Endothelial cell of umbilical vein (primary cell): ENCODE measurements at regions of chr3 and their contacts with region 1.

Region 1: DNA sequence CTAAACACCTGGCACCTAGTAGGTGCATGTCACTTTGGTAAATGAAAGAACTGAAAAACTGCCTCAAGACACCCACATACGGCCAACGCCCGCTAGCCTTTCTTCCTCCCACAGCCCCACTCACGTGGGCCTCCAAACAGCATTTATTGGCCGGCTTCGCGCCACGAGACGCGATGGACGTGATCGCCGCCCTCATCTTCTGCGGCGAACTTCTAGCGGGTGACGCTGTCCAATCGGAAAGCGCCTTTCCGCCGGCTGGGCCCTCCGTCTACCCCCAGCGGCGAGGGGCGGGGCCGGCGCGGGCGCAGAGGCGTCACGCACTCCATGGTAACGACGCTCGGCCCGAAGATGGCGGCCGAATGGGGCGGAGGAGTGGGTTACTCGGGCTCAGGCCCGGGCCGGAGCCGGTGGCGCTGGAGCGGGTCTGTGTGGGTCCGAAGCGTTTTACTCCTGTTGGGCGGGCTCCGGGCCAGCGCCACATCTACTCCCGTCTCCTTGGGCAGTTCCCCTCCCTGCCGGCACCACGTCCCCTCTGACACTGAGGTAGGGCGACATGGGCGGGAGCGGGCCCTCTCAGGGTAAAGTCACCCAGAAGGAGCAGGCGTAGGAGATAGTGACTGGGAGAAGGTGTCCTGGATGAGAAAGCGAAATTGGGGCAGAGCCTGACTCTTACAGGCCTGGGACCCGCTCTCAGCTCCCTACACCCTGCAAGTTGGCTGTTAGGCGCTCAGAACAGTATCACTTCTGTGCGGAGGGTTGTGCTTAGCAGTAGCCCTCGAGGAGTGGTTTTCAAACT is at the start of gene LMLN:
- DNase-seq: peak; percentile 97
- H3K4me3 ChIP-seq: peak within 1 kb of the TSS; percentile 30 to 75 (median 68)
- H3K27ac ChIP-seq: no peak within 1 kb of the TSS
- H3K4me1 ChIP-seq: peaks cover 15% of the 10 kb centered on the region
- H3K27me3 ChIP-seq: no peaks in the 10 kb centered on the region
- CTCF ChIP-seq: no peak
- POLR2A ChIP-seq: peak; percentile 77
- total RNA-seq, gene LMLN: 6.5 and 9.0 TPM in 2 replicates

Region 2: GRCh38 chr3:197682713-197683112 is 277.4 kb before region 1 on chr3:
- CTCF ChIA-PET with region 1: no interaction called
- POLR2A ChIA-PET with region 1: no interaction called
- dilution Hi-C with region 1: no loop called
- intact Hi-C with region 1: no loop called
- DNase-seq: no peak
- H3K4me3 ChIP-seq: no peak overlapping the region
- H3K27ac ChIP-seq: no peak overlapping the region
- H3K4me1 ChIP-seq: no peaks in the 10 kb centered on the region
- H3K27me3 ChIP-seq: no peaks in the 10 kb centered on the region
- CTCF ChIP-seq: no peak
- POLR2A ChIP-seq: no peak

Region 3: DNA sequence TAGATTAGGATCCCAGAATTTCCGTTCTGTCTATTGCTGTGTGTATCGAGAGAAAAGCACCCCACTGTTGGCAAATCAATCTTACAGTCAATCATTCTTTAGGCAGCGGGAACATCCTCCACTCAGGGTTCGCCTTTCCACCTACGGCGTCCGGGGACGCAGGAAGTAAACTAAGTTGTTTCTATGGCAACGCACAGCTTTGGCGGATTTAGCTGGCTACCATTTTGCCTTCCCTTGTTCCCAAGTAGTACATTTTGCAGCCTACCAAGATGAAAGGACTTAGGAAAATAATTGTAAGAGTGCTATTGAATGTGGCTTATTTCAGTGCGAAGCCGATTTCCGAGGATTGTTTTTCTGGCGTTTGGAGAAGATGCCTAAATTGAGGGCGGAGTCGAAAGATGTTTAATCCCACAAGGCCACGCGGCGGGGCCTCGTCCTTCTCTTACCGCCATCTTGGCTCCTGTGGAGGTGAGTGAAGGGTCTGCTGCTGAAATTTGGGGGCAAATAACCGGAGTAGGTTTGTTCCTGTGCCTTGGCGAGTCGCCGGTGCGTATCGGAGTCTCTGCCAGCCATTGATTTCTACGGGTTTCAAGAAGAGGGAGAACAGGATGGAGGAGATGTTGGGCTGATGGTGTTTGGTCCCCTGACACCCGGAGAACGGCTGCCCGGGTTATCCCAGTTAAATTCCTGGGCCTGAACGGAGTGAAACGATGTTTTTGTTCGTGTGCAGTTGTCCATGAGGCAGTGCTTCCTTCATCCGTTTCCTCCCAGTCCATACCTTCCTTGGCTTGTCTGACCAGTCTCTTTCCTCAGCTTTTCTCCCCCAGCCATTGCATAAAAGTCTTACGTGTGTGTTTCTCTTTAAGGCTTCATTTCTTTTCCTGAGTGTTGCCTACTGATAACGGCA is 10.1 kb before region 1 on chr3 and contains the start of gene RPL35A:
- CTCF ChIA-PET with region 1: interaction called, 3 read pairs
- POLR2A ChIA-PET with region 1: interaction called, 4 read pairs
- dilution Hi-C with region 1: no loop called
- intact Hi-C with region 1: loop called (anchors 1 kb)
- DNase-seq: peak; percentile 98
- H3K4me3 ChIP-seq: peak within 1 kb of the TSS; percentile 61 to 82 (median 82)
- H3K27ac ChIP-seq: peak within 1 kb of the TSS; percentile 85
- H3K4me1 ChIP-seq: peaks cover 23% of the 10 kb centered on the region
- H3K27me3 ChIP-seq: no peaks in the 10 kb centered on the region
- CTCF ChIP-seq: no peak
- POLR2A ChIP-seq: peak; percentile 99
- total RNA-seq, gene RPL35A: 1,094 and 1,153 TPM in 2 replicates

Region 4: GRCh38 chr3:197997936-197998335 is 37.8 kb after region 1 on chr3:
- CTCF ChIA-PET with region 1: no interaction called
- POLR2A ChIA-PET with region 1: no interaction called
- dilution Hi-C with region 1: no loop called
- intact Hi-C with region 1: no loop called
- DNase-seq: no peak
- H3K4me3 ChIP-seq: no peak overlapping the region
- H3K27ac ChIP-seq: no peak overlapping the region
- H3K4me1 ChIP-seq: no peaks in the 10 kb centered on the region
- H3K27me3 ChIP-seq: no peaks in the 10 kb centered on the region
- CTCF ChIP-seq: no peak
- POLR2A ChIP-seq: no peak